ENCODE measurements at regions of chr7 and their contacts with region 1.

Region 1: GRCh38 chr7:108146070-108146837 is 16.1 kb upstream of the LAMB4 start:
- DNase-seq: peak; percentile 70
- H3K4me3 Mint-ChIP-seq: no peak overlapping the region
- H3K27ac Mint-ChIP-seq: no peak overlapping the region
- H3K4me1 Mint-ChIP-seq: peaks cover 2% of the 10 kb centered on the region
- H3K27me3 Mint-ChIP-seq: peaks cover 22% of the 10 kb centered on the region

Region 2: DNA sequence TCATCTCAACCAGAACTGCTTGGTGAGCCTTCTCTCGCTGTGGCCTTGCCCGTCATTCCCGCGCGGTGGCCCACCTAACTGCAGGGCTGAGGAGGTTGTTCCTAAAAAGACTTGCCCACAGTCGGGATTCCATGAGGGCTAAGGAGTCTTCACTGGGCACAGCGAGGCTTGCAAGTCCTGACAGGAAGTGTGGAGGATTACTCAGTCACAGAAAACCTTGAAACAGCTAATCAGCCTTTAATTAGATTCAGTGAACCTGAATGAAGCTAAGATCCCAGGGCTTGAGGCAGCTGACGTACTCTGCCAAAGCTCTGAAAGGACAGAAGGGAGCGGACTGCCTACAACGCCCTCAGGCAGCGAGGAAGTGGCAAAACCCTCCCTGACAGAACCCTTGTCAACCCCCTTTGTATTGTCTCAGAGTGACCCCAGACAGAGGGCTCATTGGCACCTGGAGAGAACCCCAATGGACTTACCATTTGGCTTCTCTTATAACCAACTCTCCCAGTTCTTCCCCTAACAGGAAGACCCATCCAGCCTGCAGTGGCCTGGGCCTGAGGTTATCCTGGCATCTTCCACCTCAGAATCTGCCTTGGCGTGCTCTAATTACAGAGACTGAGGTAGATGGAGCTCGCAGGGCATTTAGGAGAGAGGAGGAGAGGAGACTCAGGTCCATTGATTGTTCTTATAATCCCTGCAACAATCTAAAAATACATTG is 13.5 kb before region 1 on chr7:
- CTCF ChIA-PET with region 1: interaction called, 10 read pairs
- POLR2A ChIA-PET with region 1: interaction called, 3 read pairs
- DNase-seq: no peak
- H3K4me3 Mint-ChIP-seq: no peak overlapping the region
- H3K27ac Mint-ChIP-seq: no peak overlapping the region
- H3K4me1 Mint-ChIP-seq: peaks cover 18% of the 10 kb centered on the region
- H3K27me3 Mint-ChIP-seq: peaks cover 9% of the 10 kb centered on the region

Measured in activated CD4-positive, alpha-beta T cell treated with anti-CD3 and anti-CD28 coated beads, Interleukin-2, amount 10 ng/mL, durations not matched to agents 7 days and 5 days (primary cell).